HepG2 (cell line): ENCODE measurements at regions of chr11 and their contacts with region 1.

Region 1: DNA sequence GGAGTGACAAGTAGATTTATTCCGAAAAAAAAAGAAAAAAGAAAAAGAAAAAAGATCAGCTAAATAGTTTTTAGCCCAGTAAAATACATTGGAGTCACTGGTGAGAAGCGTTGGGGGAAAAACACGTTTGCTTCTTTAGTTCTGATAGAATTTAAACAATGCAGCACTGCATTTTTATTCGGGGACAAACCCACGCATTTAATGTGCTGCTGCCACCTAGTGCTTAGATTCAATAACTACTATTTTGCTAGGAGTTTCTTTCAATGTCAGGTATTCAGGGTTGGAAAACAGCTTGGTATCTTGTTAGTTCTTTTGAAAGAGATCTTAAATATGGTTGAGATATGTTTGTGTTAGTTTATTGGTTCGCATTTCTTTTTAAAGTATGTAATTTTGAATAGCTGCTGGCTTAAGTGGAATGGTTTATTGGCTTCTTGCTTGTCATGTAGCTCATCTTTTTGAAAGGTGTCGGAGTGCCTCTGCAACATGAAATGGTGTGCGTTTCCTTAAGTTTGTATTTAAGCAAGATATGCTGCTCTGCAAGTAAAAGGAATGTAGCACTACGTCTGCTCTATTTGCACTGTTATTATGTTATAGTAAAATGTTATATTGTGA is 41.9 kb downstream of the SVIP start:
- DNase-seq: peak; percentile 45
- ATAC-seq: peak; percentile 63
- H3K4me3 ChIP-seq: no peak overlapping the region
- H3K27ac ChIP-seq: no peak overlapping the region
- H3K4me1 ChIP-seq: peaks cover 15% of the 10 kb centered on the region
- H3K27me3 ChIP-seq: no peaks in the 10 kb centered on the region
- CTCF ChIP-seq: peak; percentile 73
- EP300 ChIP-seq: no peak
- POLR2A ChIP-seq: no peak
- RAD21 ChIP-seq: peak; percentile 48

Region 2: GRCh38 chr11:22304337-22304961 is 483.2 kb before region 1 on chr11:
- CTCF ChIA-PET with region 1: no interaction called
- POLR2A ChIA-PET with region 1: no interaction called
- in situ Hi-C with region 1: no loop called
- intact Hi-C with region 1: no loop called
- DNase-seq: peak; percentile 12
- ATAC-seq: 0 out of 3 replicates have a peak, but pooled peaks have one; percentile 33
- H3K4me3 ChIP-seq: no peak overlapping the region
- H3K27ac ChIP-seq: no peak overlapping the region
- H3K4me1 ChIP-seq: no peaks in the 10 kb centered on the region
- H3K27me3 ChIP-seq: no peaks in the 10 kb centered on the region
- CTCF ChIP-seq: peak; percentile 59
- EP300 ChIP-seq: no peak
- POLR2A ChIP-seq: no peak
- RAD21 ChIP-seq: no peak

Region 3: DNA sequence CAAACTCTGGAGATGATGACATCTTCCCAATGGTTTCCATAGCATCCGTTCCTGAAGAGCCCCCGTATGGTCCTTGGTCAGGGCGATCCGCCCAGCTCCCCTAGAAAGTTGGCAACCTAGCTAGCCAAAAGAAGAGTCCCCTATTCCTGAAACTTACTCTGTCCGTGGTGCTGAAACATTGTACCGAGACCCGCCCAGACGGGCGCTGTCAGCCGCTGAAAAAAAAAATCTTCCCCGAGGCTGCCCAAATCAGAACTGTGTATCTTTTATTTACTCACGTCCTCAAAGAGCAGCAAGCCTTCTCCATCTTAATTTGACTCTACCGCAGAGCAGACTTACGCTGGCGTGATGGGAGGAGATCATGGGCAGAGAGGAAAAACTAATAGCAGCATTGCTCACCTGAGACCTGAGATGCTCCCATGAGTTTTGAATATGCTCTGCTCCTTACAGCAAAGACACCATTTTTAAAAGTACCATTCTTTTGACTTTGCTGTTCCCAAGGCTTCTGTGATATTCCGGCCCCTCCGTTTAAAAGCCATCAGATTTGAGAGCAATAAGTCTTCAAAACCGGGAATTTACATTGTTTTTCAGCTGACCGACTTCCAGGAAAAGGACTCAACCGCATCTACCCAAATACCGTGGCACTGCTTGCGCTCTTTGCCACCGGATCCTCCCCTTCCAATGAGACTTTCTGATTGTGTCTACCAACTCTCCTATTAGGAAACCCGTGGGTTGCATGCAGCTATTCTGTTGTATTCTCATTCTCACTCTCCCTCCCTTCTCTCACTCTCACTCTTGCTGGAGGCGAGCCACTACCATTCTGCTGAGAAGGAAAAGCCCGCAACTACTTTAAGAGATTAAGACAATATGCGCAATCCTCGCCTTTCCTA is 449.8 kb before region 1 on chr11 and contains the start of gene SLC17A6:
- CTCF ChIA-PET with region 1: interaction called, 5 read pairs
- POLR2A ChIA-PET with region 1: no interaction called
- in situ Hi-C with region 1: loop called (anchors 10 kb)
- intact Hi-C with region 1: loop called (anchors 2 kb)
- DNase-seq: peak; percentile 21
- ATAC-seq: peak; percentile 56; the same call in 2 of the 3 replicates
- H3K4me3 ChIP-seq: no peak within 1 kb of the TSS
- H3K27ac ChIP-seq: no peak within 1 kb of the TSS
- H3K4me1 ChIP-seq: no peaks in the 10 kb centered on the region
- H3K27me3 ChIP-seq: peaks cover 5 to 29% of the 10 kb centered on the region in 2 experiments; a peak in 3 of 5 replicates
- CTCF ChIP-seq: no peak
- EP300 ChIP-seq: no peak
- POLR2A ChIP-seq: no peak
- RAD21 ChIP-seq: no peak
- total RNA-seq, gene SLC17A6: not detected in 2 replicates

Region 4: DNA sequence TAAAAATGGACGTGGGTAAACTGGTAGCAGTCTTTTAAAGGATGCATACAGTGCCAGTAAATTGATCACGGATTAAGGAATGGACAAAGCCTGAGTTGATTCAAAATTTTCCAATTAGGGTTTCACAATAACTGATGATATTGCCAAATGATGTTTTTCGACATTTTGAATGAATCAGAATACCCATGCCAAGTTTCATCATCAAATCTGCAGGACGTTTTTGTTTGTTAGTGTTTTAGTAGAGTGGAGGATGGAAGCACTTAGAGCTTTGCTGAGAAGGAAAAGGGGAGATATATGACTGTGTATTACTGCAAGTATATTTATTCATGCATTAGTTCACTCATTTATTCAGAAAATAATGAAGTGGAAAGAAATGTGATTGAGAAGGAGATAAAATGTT is 371.2 kb before region 1 on chr11:
- CTCF ChIA-PET with region 1: no interaction called
- POLR2A ChIA-PET with region 1: no interaction called
- in situ Hi-C with region 1: no loop called
- intact Hi-C with region 1: no loop called
- DNase-seq: no peak
- ATAC-seq: no peak
- H3K4me3 ChIP-seq: no peak overlapping the region
- H3K27ac ChIP-seq: no peak overlapping the region
- H3K4me1 ChIP-seq: no peaks in the 10 kb centered on the region
- H3K27me3 ChIP-seq: no peaks in the 10 kb centered on the region
- CTCF ChIP-seq: no peak
- EP300 ChIP-seq: no peak
- POLR2A ChIP-seq: no peak
- RAD21 ChIP-seq: no peak

Region 5: GRCh38 chr11:22625448-22626287 is 162.0 kb before region 1 on chr11 and contains the start of gene FANCF:
- CTCF ChIA-PET with region 1: no interaction called
- POLR2A ChIA-PET with region 1: interaction called, 3 read pairs
- in situ Hi-C with region 1: no loop called
- intact Hi-C with region 1: loop called (anchors 1 kb)
- DNase-seq: peak; percentile 97
- ATAC-seq: peak; percentile 95
- H3K4me3 ChIP-seq: peak within 1 kb of the TSS; percentile 77 to 93 (median 84)
- H3K27ac ChIP-seq: peak within 1 kb of the TSS; percentile 89
- H3K4me1 ChIP-seq: peaks cover 30% of the 10 kb centered on the region
- H3K27me3 ChIP-seq: no peaks in the 10 kb centered on the region
- CTCF ChIP-seq: no peak
- EP300 ChIP-seq: peak in 1 of 2 experiments; percentile 14; a peak in 1 of 4 replicates
- POLR2A ChIP-seq: peak; percentile 70 to 82; a peak in 2 of 4 replicates
- RAD21 ChIP-seq: peak; percentile 37; the same call in 1 of the 2 replicates
- total RNA-seq, gene FANCF: 9.7 and 12.3 TPM in 2 replicates

Region 6: DNA sequence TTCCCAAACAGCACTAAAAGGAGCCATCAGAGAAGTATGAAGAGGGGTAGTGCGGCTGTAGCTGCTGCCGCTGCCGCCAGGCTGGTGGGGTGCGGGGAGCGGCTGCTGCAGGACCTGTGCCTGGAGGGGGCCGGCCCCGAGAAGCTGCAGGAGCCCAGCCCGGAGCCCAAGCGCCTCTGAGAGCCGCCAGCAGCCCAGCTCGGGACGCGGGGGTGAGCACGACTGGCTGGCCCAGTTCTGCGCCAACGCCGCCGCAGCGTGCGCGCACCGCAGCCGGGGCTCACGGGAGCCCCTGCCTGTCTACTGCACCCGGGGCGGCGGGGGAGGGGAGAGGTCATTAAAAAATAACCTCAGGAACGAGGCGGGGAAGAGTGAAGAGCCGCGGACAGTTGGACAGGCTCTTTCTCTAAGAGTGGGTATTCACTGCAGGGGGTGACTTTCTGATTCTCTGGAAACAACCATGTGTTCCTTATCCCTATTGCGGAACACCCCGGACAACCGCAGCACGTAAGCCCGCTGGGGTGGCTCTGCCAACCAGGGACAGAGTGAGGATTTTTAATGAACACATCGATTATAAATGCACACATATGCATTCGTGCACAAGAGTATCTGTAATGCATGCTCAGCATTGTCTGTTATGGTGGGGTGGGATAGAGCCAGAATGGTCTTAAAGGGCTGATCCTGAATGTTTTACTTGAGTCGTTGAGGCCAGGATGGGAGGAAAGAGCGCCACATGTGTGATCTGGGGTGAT is 120.8 kb before region 1 on chr11:
- CTCF ChIA-PET with region 1: interaction called, 4 read pairs
- POLR2A ChIA-PET with region 1: interaction called, 5 read pairs
- in situ Hi-C with region 1: loop called (anchors 5 kb)
- intact Hi-C with region 1: loop called (anchors 2 kb)
- DNase-seq: peak; percentile 53
- ATAC-seq: peak; percentile 98
- H3K4me3 ChIP-seq: peak overlapping the region; percentile 74 to 90 (median 86)
- H3K27ac ChIP-seq: peak overlapping the region; percentile 87
- H3K4me1 ChIP-seq: peaks cover 58% of the 10 kb centered on the region
- H3K27me3 ChIP-seq: no peaks in the 10 kb centered on the region; a peak in 1 of 5 replicates
- CTCF ChIP-seq: 0 out of 2 replicates have a peak, but pooled peaks have one; percentile 8
- EP300 ChIP-seq: no peak; a peak in 1 of 4 replicates
- POLR2A ChIP-seq: peak; percentile 62 to 64; a peak in 3 of 4 replicates
- RAD21 ChIP-seq: peak; percentile 59

Region 7: GRCh38 chr11:22730319-22730718 is 57.3 kb before region 1 on chr11:
- CTCF ChIA-PET with region 1: no interaction called
- POLR2A ChIA-PET with region 1: no interaction called
- in situ Hi-C with region 1: no loop called
- intact Hi-C with region 1: loop called (anchors 2 kb)
- DNase-seq: peak; percentile 59
- ATAC-seq: peak; percentile 56
- H3K4me3 ChIP-seq: no peak overlapping the region
- H3K27ac ChIP-seq: no peak overlapping the region
- H3K4me1 ChIP-seq: peaks cover 10% of the 10 kb centered on the region
- H3K27me3 ChIP-seq: no peaks in the 10 kb centered on the region
- CTCF ChIP-seq: peak; percentile 35
- EP300 ChIP-seq: no peak
- POLR2A ChIP-seq: no peak
- RAD21 ChIP-seq: peak; percentile 48

Region 8: DNA sequence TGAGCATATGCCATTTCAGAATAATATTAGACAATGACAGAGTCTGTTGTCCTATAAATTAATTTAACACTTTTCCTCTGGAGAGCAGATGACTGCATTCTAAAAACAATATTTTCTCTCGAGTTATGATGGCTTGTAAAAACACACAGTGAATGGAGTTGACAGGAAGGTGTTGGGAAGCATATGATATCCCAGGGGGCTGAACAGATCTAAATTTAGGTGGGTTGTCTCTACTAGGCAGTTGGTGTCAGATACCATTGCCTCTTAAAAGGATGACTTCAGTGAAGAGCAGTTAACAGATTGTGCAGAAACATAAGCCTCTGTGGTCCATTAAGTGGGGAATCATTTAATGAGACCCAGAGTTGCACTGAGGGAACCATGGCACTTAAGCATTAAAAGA is 11.2 kb after region 1 on chr11:
- CTCF ChIA-PET with region 1: no interaction called
- POLR2A ChIA-PET with region 1: no interaction called
- in situ Hi-C with region 1: no loop called
- intact Hi-C with region 1: no loop called
- DNase-seq: no peak
- ATAC-seq: no peak
- H3K4me3 ChIP-seq: no peak overlapping the region
- H3K27ac ChIP-seq: no peak overlapping the region
- H3K4me1 ChIP-seq: peaks cover 10% of the 10 kb centered on the region
- H3K27me3 ChIP-seq: no peaks in the 10 kb centered on the region
- CTCF ChIP-seq: no peak
- EP300 ChIP-seq: no peak
- POLR2A ChIP-seq: no peak
- RAD21 ChIP-seq: no peak